Activated CD4-positive, alpha-beta memory T cell treated with anti-CD3 and anti-CD28 coated beads for 36 hours (primary cell): ENCODE measurements at regions of chr6 and their contacts with region 1.

Region 1: DNA sequence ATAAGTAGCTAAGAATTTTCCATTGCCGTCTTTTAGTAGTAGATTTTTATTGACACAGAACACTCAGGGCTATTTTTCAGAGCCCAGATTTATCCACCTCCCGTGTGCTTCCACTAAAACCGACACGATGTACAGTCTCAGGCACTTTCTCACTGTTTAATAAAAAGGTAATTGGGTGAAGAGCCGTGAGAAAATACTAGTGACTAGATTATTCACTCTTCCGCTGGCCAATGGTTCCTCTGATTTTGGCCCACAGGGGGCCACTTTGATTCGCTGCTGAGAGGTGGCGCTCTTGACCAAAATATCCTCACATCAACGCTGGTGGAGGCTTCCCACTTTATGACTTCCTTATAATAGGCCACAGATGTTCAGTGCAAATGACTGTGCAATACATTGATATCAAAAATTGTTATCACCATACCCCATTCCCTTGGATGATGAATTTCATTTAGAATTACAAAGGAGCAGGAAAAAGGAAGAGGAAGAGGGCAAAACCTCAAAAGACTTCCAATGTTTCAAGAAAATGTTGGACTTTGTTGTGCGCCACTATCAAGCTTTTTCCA is 12.3 kb upstream of the HDDC2 start:
- DNase-seq: peak; percentile 58
- H3K4me3 Mint-ChIP-seq: no peak overlapping the region
- H3K27ac Mint-ChIP-seq: no peak overlapping the region
- H3K4me1 Mint-ChIP-seq: no peaks in the 10 kb centered on the region
- H3K27me3 Mint-ChIP-seq: peaks cover 11% of the 10 kb centered on the region

Region 2: GRCh38 chr6:125301435-125302391 is 12.4 kb before region 1 on chr6 and contains the start of gene HDDC2:
- CTCF ChIA-PET with region 1: interaction called, 16 read pairs
- POLR2A ChIA-PET with region 1: interaction called, 3 read pairs
- intact Hi-C with region 1: no loop called
- DNase-seq: peak; percentile 57
- H3K4me3 Mint-ChIP-seq: peak within 1 kb of the TSS; percentile 91
- H3K27ac Mint-ChIP-seq: peak within 1 kb of the TSS; percentile 95
- H3K4me1 Mint-ChIP-seq: peaks cover 54% of the 10 kb centered on the region
- H3K27me3 Mint-ChIP-seq: no peaks in the 10 kb centered on the region
- total RNA-seq, gene HDDC2: 88.9 to 92.3 TPM

Region 3: GRCh38 chr6:125357515-125358256 is 43.6 kb after region 1 on chr6:
- CTCF ChIA-PET with region 1: no interaction called
- POLR2A ChIA-PET with region 1: no interaction called
- intact Hi-C with region 1: no loop called
- DNase-seq: peak; percentile 18
- H3K4me3 Mint-ChIP-seq: no peak overlapping the region
- H3K27ac Mint-ChIP-seq: no peak overlapping the region
- H3K4me1 Mint-ChIP-seq: peaks cover 9% of the 10 kb centered on the region
- H3K27me3 Mint-ChIP-seq: peaks cover 14% of the 10 kb centered on the region

Region 4: DNA sequence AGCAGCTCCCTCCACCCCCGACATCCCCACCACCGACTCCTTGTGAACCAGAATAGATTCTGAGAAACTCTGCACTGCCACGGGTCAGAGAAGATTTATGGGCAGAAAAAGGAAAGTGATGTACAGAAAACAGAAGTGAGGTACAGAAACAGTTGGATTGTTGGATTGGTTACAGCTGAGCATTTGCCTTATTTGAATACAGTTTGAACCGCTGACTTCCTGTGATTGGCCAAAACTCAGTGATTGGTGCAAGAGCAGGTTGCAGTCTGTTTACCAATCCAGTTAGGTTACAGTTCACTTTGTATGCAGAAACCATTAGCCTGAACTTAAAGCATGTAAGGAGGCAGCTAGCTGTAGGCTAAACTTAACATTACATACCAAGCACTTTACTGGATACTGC is 118.9 kb after region 1 on chr6:
- CTCF ChIA-PET with region 1: no interaction called
- POLR2A ChIA-PET with region 1: no interaction called
- intact Hi-C with region 1: no loop called
- DNase-seq: no peak
- H3K4me3 Mint-ChIP-seq: no peak overlapping the region
- H3K27ac Mint-ChIP-seq: no peak overlapping the region
- H3K4me1 Mint-ChIP-seq: no peaks in the 10 kb centered on the region
- H3K27me3 Mint-ChIP-seq: peaks cover 13% of the 10 kb centered on the region

Region 5: GRCh38 chr6:125749173-125749864 is 435.2 kb after region 1 on chr6 and contains the start of gene HEY2:
- CTCF ChIA-PET with region 1: interaction called, 49 read pairs
- POLR2A ChIA-PET with region 1: no interaction called
- intact Hi-C with region 1: loop called (anchors 1 kb)
- DNase-seq: peak; percentile 88
- H3K4me3 Mint-ChIP-seq: peak within 1 kb of the TSS; percentile 79
- H3K27ac Mint-ChIP-seq: no peak within 1 kb of the TSS
- H3K4me1 Mint-ChIP-seq: peaks cover 29% of the 10 kb centered on the region
- H3K27me3 Mint-ChIP-seq: peaks cover 67% of the 10 kb centered on the region
- total RNA-seq, gene HEY2: not detected

Region 6: DNA sequence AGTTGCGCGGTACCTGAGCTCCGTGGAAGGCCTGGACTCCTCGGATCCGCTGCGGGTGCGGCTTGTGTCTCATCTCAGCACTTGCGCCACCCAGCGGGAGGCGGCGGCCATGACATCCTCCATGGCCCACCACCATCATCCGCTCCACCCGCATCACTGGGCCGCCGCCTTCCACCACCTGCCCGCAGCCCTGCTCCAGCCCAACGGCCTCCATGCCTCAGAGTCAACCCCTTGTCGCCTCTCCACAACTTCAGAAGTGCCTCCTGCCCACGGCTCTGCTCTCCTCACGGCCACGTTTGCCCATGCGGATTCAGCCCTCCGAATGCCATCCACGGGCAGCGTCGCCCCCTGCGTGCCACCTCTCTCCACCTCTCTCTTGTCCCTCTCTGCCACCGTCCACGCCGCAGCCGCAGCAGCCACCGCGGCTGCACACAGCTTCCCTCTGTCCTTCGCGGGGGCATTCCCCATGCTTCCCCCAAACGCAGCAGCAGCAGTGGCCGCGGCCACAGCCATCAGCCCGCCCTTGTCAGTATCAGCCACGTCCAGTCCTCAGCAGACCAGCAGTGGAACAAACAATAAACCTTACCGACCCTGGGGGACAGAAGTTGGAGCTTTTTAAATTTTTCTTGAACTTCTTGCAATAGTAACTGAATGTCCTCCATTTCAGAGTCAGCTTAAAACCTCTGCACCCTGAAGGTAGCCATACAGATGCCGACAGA is 445.2 kb after region 1 on chr6:
- CTCF ChIA-PET with region 1: interaction called, 49 read pairs
- POLR2A ChIA-PET with region 1: no interaction called
- intact Hi-C with region 1: no loop called
- DNase-seq: peak; percentile 16
- H3K4me3 Mint-ChIP-seq: no peak overlapping the region
- H3K27ac Mint-ChIP-seq: no peak overlapping the region
- H3K4me1 Mint-ChIP-seq: peaks cover 3% of the 10 kb centered on the region
- H3K27me3 Mint-ChIP-seq: peaks cover 28% of the 10 kb centered on the region

Region 7: DNA sequence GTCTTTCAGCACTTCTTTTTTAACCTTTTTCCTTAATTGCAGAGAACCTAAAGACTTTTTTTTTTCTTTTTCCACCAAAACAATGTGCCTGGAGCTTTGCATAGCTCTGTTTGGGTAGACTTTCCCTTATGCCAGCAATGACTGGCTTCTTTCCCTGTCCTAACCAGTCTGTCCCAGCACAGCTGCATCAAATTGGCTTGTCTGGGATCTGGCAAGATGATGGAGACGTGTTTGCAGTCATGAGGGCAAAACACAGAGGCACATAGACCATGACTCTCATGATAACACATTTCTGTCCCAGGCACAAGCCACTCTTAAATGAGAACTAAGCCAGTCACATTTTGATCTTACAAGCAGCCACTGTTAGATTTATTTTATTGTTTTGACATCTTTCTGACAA is 451.8 kb after region 1 on chr6:
- CTCF ChIA-PET with region 1: interaction called, 34 read pairs
- POLR2A ChIA-PET with region 1: no interaction called
- intact Hi-C with region 1: loop called (anchors 1 kb)
- DNase-seq: no peak
- H3K4me3 Mint-ChIP-seq: no peak overlapping the region
- H3K27ac Mint-ChIP-seq: no peak overlapping the region
- H3K4me1 Mint-ChIP-seq: peaks cover 3% of the 10 kb centered on the region
- H3K27me3 Mint-ChIP-seq: peaks cover 35% of the 10 kb centered on the region

Region 8: DNA sequence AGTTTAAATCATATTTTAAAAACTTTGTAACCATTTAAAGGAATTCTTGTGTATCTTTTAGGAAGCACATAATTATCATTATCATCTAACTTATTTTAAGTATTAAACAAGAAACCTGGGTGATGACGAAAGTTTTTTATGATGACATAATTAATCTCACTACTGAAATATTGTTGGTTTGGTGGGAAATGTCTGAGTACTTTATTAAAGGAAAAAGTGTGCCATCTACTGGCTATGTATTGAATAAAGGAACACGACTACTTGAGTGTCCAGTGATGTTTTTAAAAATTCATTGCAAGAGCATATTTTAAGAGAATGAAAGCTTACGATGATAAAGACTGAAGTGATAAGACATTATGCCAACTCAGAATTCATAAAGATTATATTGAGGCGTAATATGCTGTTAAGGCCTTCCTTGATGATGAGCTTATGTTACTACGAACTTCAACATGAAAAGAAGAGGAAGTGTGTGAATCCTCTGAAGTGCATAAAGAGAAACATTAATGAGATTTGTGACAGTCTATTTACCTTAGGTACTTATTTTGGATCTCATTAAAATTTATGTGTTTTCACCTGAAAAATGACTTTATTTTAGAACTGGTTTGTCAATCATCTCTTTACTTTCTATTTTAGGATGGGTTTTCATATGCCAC is 660.2 kb after region 1 on chr6:
- CTCF ChIA-PET with region 1: interaction called, 7 read pairs
- POLR2A ChIA-PET with region 1: no interaction called
- intact Hi-C with region 1: loop called (anchors 2 kb)
- DNase-seq: no peak
- H3K4me3 Mint-ChIP-seq: no peak overlapping the region
- H3K27ac Mint-ChIP-seq: no peak overlapping the region
- H3K4me1 Mint-ChIP-seq: peaks cover 4% of the 10 kb centered on the region
- H3K27me3 Mint-ChIP-seq: no peaks in the 10 kb centered on the region